ENCODE measurements at regions of chr22 and their contacts with region 1.

Region 1: DNA sequence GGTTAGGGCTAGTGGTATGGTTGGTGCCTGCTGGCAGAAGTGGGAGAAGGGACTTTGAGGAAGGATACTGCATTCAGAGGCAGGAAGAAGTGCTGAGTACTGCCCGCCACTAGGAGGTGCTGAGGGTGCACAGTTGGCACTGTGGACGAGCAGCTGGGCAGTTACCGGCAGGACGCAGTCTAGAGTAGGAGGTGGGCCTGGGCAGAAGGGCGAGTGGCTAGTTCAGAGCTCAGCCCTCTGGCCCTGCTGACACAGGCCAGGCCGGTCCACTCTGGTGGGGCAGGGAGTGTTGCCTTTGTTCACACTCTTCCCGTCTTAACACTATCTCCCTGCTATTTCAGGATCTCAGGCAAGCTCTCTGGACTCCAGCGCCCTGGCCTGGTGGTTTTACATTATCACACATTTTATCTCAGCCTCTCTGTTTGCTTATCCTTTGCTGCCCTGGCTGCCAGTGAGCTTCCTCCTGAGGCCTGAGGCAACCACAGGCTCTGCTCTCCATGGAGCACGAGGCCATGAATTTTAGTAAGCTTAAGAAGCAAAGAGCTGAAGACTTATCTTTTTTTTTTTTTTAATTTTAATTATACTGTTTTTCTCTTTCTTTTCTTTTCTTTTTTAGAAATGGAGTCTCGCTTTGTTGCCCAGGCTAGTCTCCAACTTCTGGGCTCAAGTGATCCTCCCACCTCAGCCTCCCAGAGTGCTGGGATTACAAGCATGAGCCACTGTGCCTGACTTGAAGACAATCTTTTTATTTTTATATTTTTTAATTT is 26.9 kb downstream of the SNAP29 start:
- DNase-seq: peak; percentile 89
- H3K4me3 ChIP-seq: no peak overlapping the region
- H3K27ac ChIP-seq: peak overlapping the region; percentile 47 to 67 (median 57)
- H3K4me1 ChIP-seq: peaks cover 0 to 7% (median 4%) of the 10 kb centered on the region in 4 donors
- H3K27me3 ChIP-seq: no peaks in the 10 kb centered on the region
- CTCF ChIP-seq: peak; percentile 67 to 95 (median 84)
- EP300 ChIP-seq: no peak
- POLR2A ChIP-seq: no peak

Region 2: GRCh38 chr22:20606041-20606783 is 279.5 kb before region 1 on chr22:
- intact Hi-C with region 1: no loop called
- DNase-seq: no peak
- H3K4me3 ChIP-seq: no peak overlapping the region
- H3K27ac ChIP-seq: no peak overlapping the region
- H3K4me1 ChIP-seq: no peaks in the 10 kb centered on the region
- H3K27me3 ChIP-seq: peaks cover 0 to 14% (median 0%) of the 10 kb centered on the region in 3 donors
- CTCF ChIP-seq: peak in 3 of 4 experiments; percentile 18 to 48 (median 38)
- EP300 ChIP-seq: no peak
- POLR2A ChIP-seq: no peak

Region 3: GRCh38 chr22:20957316-20958101 is 71.8 kb after region 1 on chr22:
- intact Hi-C with region 1: loop called (anchors 2 kb)
- DNase-seq: no peak
- H3K4me3 ChIP-seq: peak overlapping the region; percentile 57 to 68 (median 62)
- H3K27ac ChIP-seq: peak overlapping the region; percentile 47 to 67 (median 61)
- H3K4me1 ChIP-seq: peaks cover 0 to 17% (median 11%) of the 10 kb centered on the region in 4 donors
- H3K27me3 ChIP-seq: no peaks in the 10 kb centered on the region
- CTCF ChIP-seq: no peak
- EP300 ChIP-seq: no peak
- POLR2A ChIP-seq: no peak

Measured in sigmoid colon (tissue), 7 donors.